HAP-1 (cell line): ENCODE measurements at regions of chr14 and their contacts with region 1.

Region 1: GRCh38 chr14:56491299-56492285 is 88.0 kb upstream of the TMEM260 start:
- DNase-seq: peak; percentile 85 to 87
- H3K4me3 ChIP-seq: no peak overlapping the region
- H3K4me1 ChIP-seq: peaks cover 6% of the 10 kb centered on the region
- H3K27me3 ChIP-seq: peaks cover 5% of the 10 kb centered on the region; the same call in 1 of the 2 replicates

Region 2: DNA sequence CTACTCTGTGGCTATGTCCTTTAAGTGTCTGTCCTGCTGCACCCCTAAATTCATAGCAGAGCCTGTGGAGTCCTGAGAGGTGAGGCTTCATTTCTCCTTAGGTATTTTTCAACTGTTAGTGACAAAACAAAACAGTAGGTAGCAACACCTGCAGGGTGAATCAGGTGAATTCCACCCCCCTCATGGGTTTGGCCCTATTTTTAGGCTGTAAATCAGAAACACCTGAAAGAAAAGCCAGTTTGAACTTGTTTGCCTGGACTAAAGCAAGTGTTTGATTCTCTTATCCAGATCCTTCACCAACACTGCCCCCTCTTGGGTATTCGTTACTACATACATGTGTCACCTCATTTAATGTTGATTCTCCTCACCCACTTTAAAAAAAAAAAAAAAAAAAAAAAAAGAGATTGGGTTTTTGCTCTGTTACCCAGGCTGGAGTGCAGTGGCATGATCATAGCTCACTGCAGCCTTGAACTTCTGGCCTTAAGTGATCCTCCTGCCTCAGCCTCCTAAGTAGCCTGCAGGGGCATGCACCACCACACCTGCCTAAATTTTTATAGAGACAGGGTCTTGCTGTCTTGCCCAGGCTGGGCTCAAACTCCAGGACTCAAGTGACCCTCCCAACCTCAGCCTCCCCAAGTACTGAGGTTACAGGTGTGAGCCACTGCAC is 1061.4 kb before region 1 on chr14:
- in situ Hi-C with region 1: loop called (anchors 10 kb)
- DNase-seq: peak; percentile 54 to 59
- H3K4me3 ChIP-seq: no peak overlapping the region
- H3K4me1 ChIP-seq: no peaks in the 10 kb centered on the region
- H3K27me3 ChIP-seq: no peaks in the 10 kb centered on the region

Region 3: DNA sequence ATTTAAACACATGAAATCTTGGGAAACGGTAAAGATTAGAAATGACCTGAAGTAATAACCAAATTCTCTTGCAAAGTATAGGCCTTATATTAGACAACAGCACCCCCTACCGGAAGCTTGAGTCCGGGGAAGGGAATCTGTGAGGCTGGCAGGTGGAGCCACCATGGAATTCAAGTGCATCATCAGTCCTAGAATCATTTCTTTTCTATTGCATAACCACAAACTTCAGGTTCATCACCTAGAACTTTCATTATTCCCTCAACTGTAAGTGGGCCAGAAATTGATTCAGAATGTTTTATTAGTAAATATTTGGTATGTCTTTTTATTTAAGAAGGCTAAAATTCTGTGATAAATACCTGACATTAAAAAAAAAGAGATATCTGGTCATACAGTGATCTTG is 825.7 kb after region 1 on chr14:
- in situ Hi-C with region 1: loop called (anchors 10 kb)
- DNase-seq: peak; percentile 71 to 89
- H3K4me3 ChIP-seq: no peak overlapping the region
- H3K4me1 ChIP-seq: no peaks in the 10 kb centered on the region
- H3K27me3 ChIP-seq: peaks cover 20% of the 10 kb centered on the region